ENCODE measurements at regions of chr10 and their contacts with region 1.

Region 1: DNA sequence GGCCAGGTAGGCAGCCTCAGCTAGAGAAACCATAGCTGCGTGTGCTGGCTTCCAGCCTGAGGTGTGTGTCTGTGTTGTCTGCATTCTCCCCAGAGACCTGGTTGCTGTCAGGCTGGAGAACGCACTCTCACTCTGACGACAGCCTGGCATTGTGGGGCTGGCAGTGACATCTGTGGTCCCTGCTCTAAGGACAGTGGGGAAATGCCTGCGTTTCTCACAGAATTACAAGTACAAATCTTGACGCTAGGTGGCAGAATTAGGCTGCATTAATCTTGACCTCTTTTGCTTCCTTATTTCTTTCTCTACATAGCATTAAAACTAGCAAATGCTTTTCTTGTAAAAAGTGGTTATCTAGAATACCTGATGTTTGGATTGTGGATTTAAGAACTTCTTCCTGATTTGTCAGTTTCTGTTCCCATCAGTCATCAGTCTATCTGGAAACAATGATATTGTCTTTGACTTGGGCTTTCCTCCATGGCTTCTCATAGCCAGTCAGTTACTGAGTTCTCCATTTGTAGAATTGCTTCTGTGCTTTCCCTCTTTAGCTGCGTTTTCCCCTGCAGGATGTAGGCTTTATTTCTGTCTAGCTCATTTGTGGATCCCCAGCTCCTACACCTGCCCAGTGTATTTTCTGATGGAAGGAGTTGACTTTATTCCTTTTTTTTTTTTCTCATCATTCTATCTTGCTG is 86.0 kb downstream of the FANK1 start:
- DNase-seq: peak; percentile 74
- ATAC-seq: peak; percentile 90
- H3K4me3 ChIP-seq: no peak overlapping the region
- H3K27ac ChIP-seq: no peak overlapping the region
- H3K4me1 ChIP-seq: no peaks in the 10 kb centered on the region
- H3K27me3 ChIP-seq: peaks cover 20% of the 10 kb centered on the region; the same call in 1 of the 2 replicates
- CTCF ChIP-seq: peak; percentile 71
- POLR2A ChIP-seq: no peak
- RAD21 ChIP-seq: peak; percentile 92

Region 2: DNA sequence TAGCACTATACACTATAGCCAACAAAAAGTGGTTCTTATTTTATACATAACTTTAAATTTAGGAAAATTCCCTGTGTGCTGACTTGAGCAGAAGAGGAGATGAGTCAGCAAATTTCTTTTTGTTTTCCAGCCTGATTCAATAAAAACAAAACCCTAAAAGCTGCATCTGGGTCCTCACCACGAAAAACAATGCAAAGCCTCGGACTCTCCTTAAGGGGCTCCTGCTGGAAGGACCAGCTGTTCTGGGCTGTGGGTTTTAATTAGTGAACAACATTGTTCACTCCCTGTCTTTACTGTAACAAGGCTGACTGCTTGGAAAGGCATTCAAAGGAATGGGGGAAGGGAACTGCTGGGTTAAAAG is 165.8 kb after region 1 on chr10:
- CTCF ChIA-PET with region 1: no interaction called
- POLR2A ChIA-PET with region 1: no interaction called
- dilution Hi-C with region 1: no loop called
- in situ Hi-C with region 1: no loop called
- intact Hi-C with region 1: loop called (anchors 5 kb)
- DNase-seq: peak; percentile 51
- ATAC-seq: peak; percentile 84
- H3K4me3 ChIP-seq: no peak overlapping the region
- H3K27ac ChIP-seq: peak overlapping the region; percentile 46; the same call in 1 of the 2 replicates
- H3K4me1 ChIP-seq: peaks cover 11% of the 10 kb centered on the region
- H3K27me3 ChIP-seq: no peaks in the 10 kb centered on the region; the same call in 1 of the 2 replicates
- CTCF ChIP-seq: no peak
- POLR2A ChIP-seq: no peak
- RAD21 ChIP-seq: no peak

Region 3: GRCh38 chr10:126247446-126247975 is 265.1 kb after region 1 on chr10:
- CTCF ChIA-PET with region 1: no interaction called
- POLR2A ChIA-PET with region 1: no interaction called
- dilution Hi-C with region 1: no loop called
- in situ Hi-C with region 1: no loop called
- intact Hi-C with region 1: loop called (anchors 5 kb)
- DNase-seq: peak; percentile 100
- ATAC-seq: peak; percentile 79
- H3K4me3 ChIP-seq: no peak overlapping the region
- H3K27ac ChIP-seq: peak overlapping the region; percentile 39; the same call in 1 of the 2 replicates
- H3K4me1 ChIP-seq: peaks cover 18% of the 10 kb centered on the region
- H3K27me3 ChIP-seq: no peaks in the 10 kb centered on the region
- CTCF ChIP-seq: no peak
- POLR2A ChIP-seq: 0 out of 2 replicates have a peak, but pooled peaks have one; percentile 21
- RAD21 ChIP-seq: peak; percentile 34; the same call in 1 of the 2 replicates

Region 4: GRCh38 chr10:126504063-126504739 is 521.8 kb after region 1 on chr10:
- CTCF ChIA-PET with region 1: interaction called, 21 read pairs
- POLR2A ChIA-PET with region 1: no interaction called
- dilution Hi-C with region 1: no loop called
- in situ Hi-C with region 1: loop called (anchors 5 kb)
- intact Hi-C with region 1: loop called (anchors 1 kb)
- DNase-seq: peak; percentile 64
- ATAC-seq: peak; percentile 93
- H3K4me3 ChIP-seq: no peak overlapping the region
- H3K27ac ChIP-seq: no peak overlapping the region
- H3K4me1 ChIP-seq: peaks cover 3% of the 10 kb centered on the region; the same call in 1 of the 2 replicates
- H3K27me3 ChIP-seq: peaks cover 6% of the 10 kb centered on the region; the same call in 1 of the 2 replicates
- CTCF ChIP-seq: peak; percentile 79
- POLR2A ChIP-seq: no peak
- RAD21 ChIP-seq: peak; percentile 93

Region 5: DNA sequence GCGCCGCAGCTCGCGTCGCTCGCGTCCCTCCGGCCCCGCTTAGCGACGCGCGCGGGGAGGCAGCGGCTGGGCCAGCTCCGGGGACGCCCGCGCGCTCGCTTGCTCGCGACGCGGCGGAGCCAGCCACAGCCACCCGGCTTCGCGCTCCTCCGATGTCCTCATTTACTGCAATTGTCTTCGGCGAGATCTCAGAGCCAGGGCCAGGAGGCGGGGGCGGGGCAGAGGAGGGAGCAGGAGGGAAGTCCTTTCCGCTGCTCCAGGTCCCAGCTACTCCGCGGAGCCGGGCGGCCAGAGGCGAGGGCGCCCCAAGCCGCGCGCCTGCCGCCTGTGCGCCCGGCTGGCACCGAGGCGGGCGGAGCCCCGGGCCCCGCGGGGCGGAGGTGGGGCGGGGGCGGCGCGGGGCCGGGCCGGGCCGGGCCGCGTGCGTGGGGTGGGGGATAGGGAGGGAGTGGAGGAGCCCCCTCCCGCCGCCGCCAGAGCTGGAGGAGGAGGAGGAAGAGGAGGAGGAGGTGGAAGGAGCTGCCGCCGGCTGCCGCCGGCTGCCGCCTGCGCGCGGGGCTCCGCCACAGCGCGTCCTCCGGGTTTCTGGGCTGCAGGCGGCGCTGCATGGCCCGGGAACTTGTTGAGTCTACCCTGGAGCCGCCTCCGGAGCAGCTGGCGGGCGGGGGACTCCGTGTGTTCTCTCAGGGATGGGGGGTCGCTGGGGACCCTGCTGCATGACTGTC is 1214.0 kb after region 1 on chr10 and contains the start of gene INSYN2A:
- CTCF ChIA-PET with region 1: no interaction called
- POLR2A ChIA-PET with region 1: interaction called, 13 read pairs
- dilution Hi-C with region 1: no loop called
- in situ Hi-C with region 1: no loop called
- intact Hi-C with region 1: no loop called
- DNase-seq: peak; percentile 44
- ATAC-seq: peak; percentile 77
- H3K4me3 ChIP-seq: peak within 1 kb of the TSS; percentile 44
- H3K27ac ChIP-seq: no peak within 1 kb of the TSS; the same call in 1 of the 2 replicates
- H3K4me1 ChIP-seq: peaks cover 8% of the 10 kb centered on the region; the same call in 1 of the 2 replicates
- H3K27me3 ChIP-seq: no peaks in the 10 kb centered on the region; the same call in 1 of the 2 replicates
- CTCF ChIP-seq: peak; percentile 39
- POLR2A ChIP-seq: no peak
- RAD21 ChIP-seq: peak; percentile 34
- total RNA-seq, gene INSYN2A: under 0.01 and 0.18 TPM in 2 replicates